ENCODE measurements at regions of chr1 and their contacts with region 1.

Region 1: DNA sequence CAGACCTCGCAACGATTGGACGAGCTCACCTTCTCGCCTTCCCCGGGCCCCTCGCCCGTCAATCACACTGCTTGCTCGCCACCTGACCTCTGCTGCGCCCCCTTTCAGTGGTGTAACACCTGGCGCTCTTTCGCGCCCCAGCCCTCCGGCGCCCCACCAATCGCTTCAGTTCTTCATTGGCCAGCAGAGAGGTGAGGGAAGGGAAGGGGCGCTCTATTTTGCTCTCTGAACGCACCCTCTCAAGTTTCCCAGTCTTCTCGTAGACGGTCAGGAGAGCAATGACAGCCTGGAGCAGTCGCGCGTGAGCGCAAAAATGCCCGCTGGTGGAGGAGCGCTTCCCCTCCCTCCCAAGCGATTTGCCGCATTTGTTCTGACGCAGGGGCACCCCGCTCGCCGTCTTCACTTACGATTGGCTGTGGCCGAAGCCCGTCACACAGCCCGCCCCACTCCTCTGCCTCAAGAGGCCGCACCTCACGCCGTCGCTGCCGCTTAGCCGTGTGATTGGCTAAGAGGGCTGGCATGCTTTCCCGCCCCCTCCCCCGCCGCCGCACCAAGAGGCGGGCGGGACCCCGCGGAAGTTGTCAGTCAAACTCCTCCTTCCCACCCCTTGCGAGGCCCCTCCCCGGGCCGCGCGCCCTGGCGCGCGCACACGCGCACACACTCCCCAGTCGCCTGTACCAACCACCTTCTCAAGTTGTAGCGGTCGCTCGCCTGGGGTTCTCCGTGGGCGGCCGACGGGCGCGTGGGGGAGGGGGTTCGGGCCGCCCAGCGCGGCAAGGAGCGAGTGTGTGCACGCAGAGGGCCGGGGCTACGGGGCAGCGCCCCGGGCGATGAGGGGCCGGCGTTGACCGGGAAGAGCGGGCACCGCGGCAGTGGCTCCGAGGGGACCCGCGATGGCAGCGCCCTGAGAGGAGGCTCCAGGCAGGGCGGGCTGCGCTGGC is at the start of gene PPP2R5A:
- DNase-seq: peak; percentile 98 to 99 (median 99)
- H3K4me3 ChIP-seq: peak within 1 kb of the TSS; percentile 85 to 99
- H3K4me3 Mint-ChIP-seq: peak within 1 kb of the TSS; percentile 99 to 100 (median 100)
- H3K27ac ChIP-seq: peak within 1 kb of the TSS; percentile 92
- H3K27ac Mint-ChIP-seq: peak within 1 kb of the TSS; percentile 94 to 99 (median 99)
- H3K4me1 ChIP-seq: peaks cover 34% of the 10 kb centered on the region
- H3K4me1 Mint-ChIP-seq: peaks cover 26 to 49% (median 37%) of the 10 kb centered on the region in 4 donors
- H3K27me3 ChIP-seq: no peaks in the 10 kb centered on the region
- H3K27me3 Mint-ChIP-seq: no peaks in the 10 kb centered on the region
- total RNA-seq, gene PPP2R5A: 53.8 to 55.0 TPM

Region 2: GRCh38 chr1:211675230-211676105 is 609.5 kb before region 1 on chr1 and contains the start of gene NEK2:
- CTCF ChIA-PET with region 1: interaction called, 5 read pairs
- POLR2A ChIA-PET with region 1: interaction called, 15 read pairs
- intact Hi-C with region 1: loop called (anchors 1 kb)
- DNase-seq: peak; percentile 83 to 93 (median 86)
- H3K4me3 ChIP-seq: peak within 1 kb of the TSS; percentile 44 to 83
- H3K4me3 Mint-ChIP-seq: peak within 1 kb of the TSS; percentile 89 to 94 (median 92)
- H3K27ac ChIP-seq: peak within 1 kb of the TSS; percentile 49
- H3K27ac Mint-ChIP-seq: peak within 1 kb of the TSS; percentile 81 to 92 (median 86)
- H3K4me1 ChIP-seq: peaks cover 12% of the 10 kb centered on the region
- H3K4me1 Mint-ChIP-seq: peaks cover 6 to 22% (median 12%) of the 10 kb centered on the region in 4 donors
- H3K27me3 ChIP-seq: no peaks in the 10 kb centered on the region
- H3K27me3 Mint-ChIP-seq: no peaks in the 10 kb centered on the region
- total RNA-seq, gene NEK2: not detected

Region 3: GRCh38 chr1:212062832-212063438 is 222.1 kb before region 1 on chr1:
- CTCF ChIA-PET with region 1: interaction called, 14 read pairs
- POLR2A ChIA-PET with region 1: interaction called, 14 read pairs
- intact Hi-C with region 1: loop called (anchors 2 kb)
- DNase-seq: peak in 4 of 5 donors; percentile 37 to 45 (median 38)
- H3K4me3 ChIP-seq: no peak overlapping the region
- H3K4me3 Mint-ChIP-seq: no peak overlapping the region
- H3K27ac ChIP-seq: no peak overlapping the region
- H3K27ac Mint-ChIP-seq: no peak overlapping the region
- H3K4me1 ChIP-seq: no peaks in the 10 kb centered on the region
- H3K4me1 Mint-ChIP-seq: no peaks in the 10 kb centered on the region
- H3K27me3 ChIP-seq: no peaks in the 10 kb centered on the region
- H3K27me3 Mint-ChIP-seq: no peaks in the 10 kb centered on the region

Region 4: GRCh38 chr1:212414328-212415106 is 129.5 kb after region 1 on chr1 and contains the start of gene PACC1:
- CTCF ChIA-PET with region 1: no interaction called
- POLR2A ChIA-PET with region 1: interaction called, 4 read pairs
- intact Hi-C with region 1: loop called (anchors 1 kb)
- DNase-seq: peak; percentile 87 to 89 (median 88)
- H3K4me3 ChIP-seq: peak within 1 kb of the TSS; percentile 90 to 92
- H3K4me3 Mint-ChIP-seq: peak within 1 kb of the TSS; percentile 87 to 97 (median 96)
- H3K27ac ChIP-seq: peak within 1 kb of the TSS; percentile 71
- H3K27ac Mint-ChIP-seq: peak within 1 kb of the TSS; percentile 88 to 96 (median 95)
- H3K4me1 ChIP-seq: peaks cover 19% of the 10 kb centered on the region
- H3K4me1 Mint-ChIP-seq: peaks cover 16 to 38% (median 24%) of the 10 kb centered on the region in 4 donors
- H3K27me3 ChIP-seq: no peaks in the 10 kb centered on the region
- H3K27me3 Mint-ChIP-seq: no peaks in the 10 kb centered on the region
- total RNA-seq, gene PACC1: 9.7 to 12.3 TPM

Region 5: DNA sequence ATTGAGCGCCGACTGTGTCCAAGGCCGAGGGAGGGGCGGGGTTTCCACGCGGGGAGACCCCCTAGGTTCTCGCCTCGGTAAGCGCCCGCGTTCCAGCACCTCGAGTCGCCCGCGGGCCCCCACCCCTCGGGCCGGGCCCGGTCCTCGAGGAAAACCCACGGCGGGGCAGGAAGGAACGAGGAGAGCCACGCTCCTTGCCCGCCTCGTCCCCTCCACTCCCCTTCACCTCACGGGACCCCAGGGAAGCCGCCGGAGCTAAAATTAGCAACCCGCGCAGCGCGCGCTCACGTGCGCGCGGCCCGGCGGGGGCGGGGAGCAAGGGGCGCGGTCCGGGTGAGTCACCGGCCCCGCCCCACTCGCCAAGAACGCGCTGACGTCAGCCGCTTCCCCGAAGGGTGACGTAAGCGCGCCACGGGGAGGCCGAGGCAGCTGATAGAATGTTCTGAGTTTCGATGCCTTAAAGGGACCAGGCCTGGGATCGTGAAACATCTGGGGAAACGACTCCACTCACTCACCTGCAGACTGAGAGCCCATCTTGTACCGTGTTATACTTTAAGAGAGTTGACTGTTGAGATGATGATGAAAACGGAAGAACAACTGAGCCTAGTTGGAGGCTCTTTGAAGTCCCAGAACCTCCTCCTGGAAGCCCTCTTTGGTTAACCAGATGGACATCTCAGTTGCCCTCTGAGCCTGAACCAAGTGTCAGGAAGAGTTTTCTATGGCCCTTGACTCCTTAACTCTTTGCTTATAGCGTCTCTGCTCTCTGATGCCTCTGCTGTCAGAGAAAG is 273.9 kb after region 1 on chr1:
- CTCF ChIA-PET with region 1: no interaction called
- POLR2A ChIA-PET with region 1: interaction called, 6 read pairs
- intact Hi-C with region 1: loop called (anchors 1 kb)
- DNase-seq: peak; percentile 90 to 92 (median 91)
- H3K4me3 ChIP-seq: peak overlapping the region in 1 of 2 donors; percentile 64
- H3K4me3 Mint-ChIP-seq: peak overlapping the region; percentile 83 to 93 (median 86)
- H3K27ac ChIP-seq: peak overlapping the region; percentile 79
- H3K27ac Mint-ChIP-seq: peak overlapping the region; percentile 81 to 100 (median 99)
- H3K4me1 ChIP-seq: peaks cover 11% of the 10 kb centered on the region
- H3K4me1 Mint-ChIP-seq: peaks cover 2 to 16% (median 8%) of the 10 kb centered on the region in 4 donors
- H3K27me3 ChIP-seq: no peaks in the 10 kb centered on the region
- H3K27me3 Mint-ChIP-seq: peaks cover 4% of the 10 kb centered on the region in 2 donors

Measured in CD4-positive, alpha-beta memory T cell (primary cell).